ENCODE measurements at regions of chr7 and their contacts with region 1.

Region 1: DNA sequence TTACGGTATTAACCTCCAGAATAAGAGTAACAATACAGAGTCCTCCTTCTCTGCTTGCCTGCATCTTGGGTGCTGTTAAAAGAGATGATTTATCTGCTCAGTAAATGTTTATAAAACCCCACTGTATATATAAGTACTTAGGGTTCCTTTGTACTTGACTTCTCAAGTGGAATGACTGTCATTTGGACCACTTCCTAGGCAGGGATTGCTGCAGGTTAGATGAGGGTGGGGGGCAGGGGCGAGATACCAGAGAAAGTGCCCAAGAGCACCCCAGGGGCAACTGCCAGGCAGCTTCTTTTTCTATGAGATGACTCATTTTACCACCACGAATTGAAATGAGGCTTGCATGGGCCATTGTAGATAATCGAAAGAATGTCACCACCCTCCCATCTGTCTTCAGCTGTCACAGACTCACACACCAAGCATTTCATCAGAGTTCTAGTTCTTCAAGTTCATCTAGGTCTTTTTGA is 421.9 kb upstream of the GALNT17 start:
- DNase-seq: peak in 1 of 2 donors; percentile 44
- ATAC-seq: peak; percentile 71 to 77
- H3K4me3 ChIP-seq: no peak overlapping the region
- H3K27ac ChIP-seq: peak overlapping the region; percentile 47 to 82 (median 68)
- H3K4me1 ChIP-seq: peaks cover 35 to 62% of the 10 kb centered on the region in 2 donors
- H3K27me3 ChIP-seq: no peaks in the 10 kb centered on the region
- CTCF ChIP-seq: no peak
- POLR2A ChIP-seq: no peak

Region 2: GRCh38 chr7:70072220-70072619 is 637.8 kb before region 1 on chr7:
- in situ Hi-C with region 1: loop called in 1 of 4 experiments (anchors 25 kb)
- intact Hi-C with region 1: no loop called
- DNase-seq: peak in 1 of 2 donors; percentile 26
- ATAC-seq: peak; percentile 86 to 99
- H3K4me3 ChIP-seq: no peak overlapping the region
- H3K27ac ChIP-seq: peak overlapping the region; percentile 26 to 76 (median 52)
- H3K4me1 ChIP-seq: peaks cover 14 to 24% of the 10 kb centered on the region in 2 donors
- H3K27me3 ChIP-seq: no peaks in the 10 kb centered on the region
- CTCF ChIP-seq: no peak
- POLR2A ChIP-seq: no peak

Region 3: DNA sequence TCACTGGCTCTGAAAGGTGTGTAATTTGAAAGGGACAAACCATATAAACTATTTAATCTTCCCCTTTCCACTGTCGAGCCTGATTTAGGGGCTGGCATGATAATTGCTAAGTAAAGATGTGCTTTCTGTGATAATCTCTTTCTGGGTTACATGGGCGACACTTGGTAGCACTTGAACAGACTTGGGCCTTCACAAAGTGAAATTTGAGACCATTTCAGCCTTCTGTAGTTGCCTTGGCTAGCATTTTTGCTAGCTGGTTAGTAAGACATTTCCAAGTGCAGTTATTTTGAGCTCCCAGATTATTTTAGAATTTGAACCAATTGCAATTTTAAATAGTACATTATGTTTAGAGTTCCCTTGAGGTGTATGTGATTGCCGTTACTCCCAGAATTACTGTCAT is 10.8 kb before region 1 on chr7:
- in situ Hi-C with region 1: no loop called
- intact Hi-C with region 1: loop called (anchors 1 kb)
- DNase-seq: no peak
- ATAC-seq: no peak
- H3K4me3 ChIP-seq: no peak overlapping the region
- H3K27ac ChIP-seq: peak overlapping the region in 3 of 4 donors; percentile 6 to 27 (median 7)
- H3K4me1 ChIP-seq: peaks cover 12 to 57% of the 10 kb centered on the region in 2 donors
- H3K27me3 ChIP-seq: no peaks in the 10 kb centered on the region
- CTCF ChIP-seq: no peak
- POLR2A ChIP-seq: no peak

Region 4: DNA sequence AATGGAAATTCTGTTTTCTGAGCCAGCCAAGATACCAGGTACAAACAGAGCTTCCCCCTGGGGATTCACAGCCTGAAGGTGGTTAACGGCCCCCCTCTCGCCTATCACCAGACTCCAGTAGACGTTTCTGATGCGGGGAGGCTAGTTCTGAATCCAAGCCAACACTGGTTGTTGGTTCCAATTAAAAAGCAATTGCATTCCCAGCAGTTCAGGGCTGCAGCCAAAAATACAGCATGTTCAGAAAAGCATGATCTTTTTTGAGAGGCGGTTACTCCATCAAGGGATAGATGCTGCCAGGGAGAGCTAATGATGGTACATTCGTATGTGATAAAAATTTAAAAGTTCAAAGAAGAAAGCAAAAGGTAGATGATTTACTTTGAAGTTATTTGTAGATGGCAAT is 902.9 kb after region 1 on chr7:
- in situ Hi-C with region 1: no loop called
- intact Hi-C with region 1: loop called (anchors 10 kb)
- DNase-seq: no peak
- ATAC-seq: no peak
- H3K4me3 ChIP-seq: no peak overlapping the region
- H3K27ac ChIP-seq: peak overlapping the region in 2 of 4 donors; percentile 26 to 70
- H3K4me1 ChIP-seq: peaks cover 28 to 30% of the 10 kb centered on the region in 2 donors
- H3K27me3 ChIP-seq: no peaks in the 10 kb centered on the region
- CTCF ChIP-seq: no peak
- POLR2A ChIP-seq: no peak

Measured in gastrocnemius medialis (tissue), 4 donors.